Posterior cingulate gyrus (tissue), 11 donors: ENCODE measurements at regions of chr4 and their contacts with region 1.

Region 1: GRCh38 chr4:89906777-89907521 is 12.3 kb downstream of the MMRN1 start:
- DNase-seq: no peak

Region 2: GRCh38 chr4:89158884-89159503 is 748.0 kb before region 1 on chr4:
- intact Hi-C with region 1: loop called (anchors 10 kb)
- DNase-seq: no peak

Region 3: GRCh38 chr4:89486042-89486441 is 420.9 kb before region 1 on chr4:
- intact Hi-C with region 1: loop called (anchors 5 kb)
- DNase-seq: no peak

Region 4: GRCh38 chr4:89598602-89599001 is 308.3 kb before region 1 on chr4:
- intact Hi-C with region 1: loop called (anchors 5 kb)
- DNase-seq: no peak